ENCODE measurements at regions of chr20 and their contacts with region 1.

Region 1: GRCh38 chr20:21529863-21530262 is 16.0 kb upstream of the NKX2-2 start:
- DNase-seq: peak in 1 of 35 experiments; percentile 49
- ATAC-seq: no peak
- H3K4me3 ChIP-seq: no peak overlapping the region
- H3K4me3 Mint-ChIP-seq: no peak overlapping the region
- H3K27ac ChIP-seq: no peak overlapping the region
- H3K27ac Mint-ChIP-seq: no peak overlapping the region
- H3K4me1 ChIP-seq: no peaks in the 10 kb centered on the region
- H3K4me1 Mint-ChIP-seq: peaks cover 0 to 4% (median 2%) of the 10 kb centered on the region in 3 donors
- H3K27me3 ChIP-seq: peaks cover 3 to 7% of the 10 kb centered on the region in 2 experiments
- H3K27me3 Mint-ChIP-seq: peaks cover 35 to 48% of the 10 kb centered on the region in 2 donors

Region 2: GRCh38 chr20:21118111-21118510 is 411.8 kb before region 1 on chr20:
- CTCF ChIA-PET with region 1: no interaction called
- POLR2A ChIA-PET with region 1: no interaction called
- DNase-seq: no peak
- ATAC-seq: no peak
- H3K4me3 ChIP-seq: no peak overlapping the region
- H3K4me3 Mint-ChIP-seq: no peak overlapping the region
- H3K27ac ChIP-seq: no peak overlapping the region
- H3K27ac Mint-ChIP-seq: no peak overlapping the region
- H3K4me1 ChIP-seq: no peaks in the 10 kb centered on the region
- H3K4me1 Mint-ChIP-seq: no peaks in the 10 kb centered on the region
- H3K27me3 ChIP-seq: peaks cover 9 to 17% of the 10 kb centered on the region in 2 experiments
- H3K27me3 Mint-ChIP-seq: peaks cover 39 to 57% of the 10 kb centered on the region in 2 donors

Region 3: GRCh38 chr20:21571841-21572690 is 42.2 kb after region 1 on chr20:
- CTCF ChIA-PET with region 1: interaction called, 9 to 11 read pairs
- POLR2A ChIA-PET with region 1: no interaction called
- DNase-seq: peak in 5 of 35 experiments; percentile 6 to 54 (median 21)
- ATAC-seq: no peak
- H3K4me3 ChIP-seq: no peak overlapping the region
- H3K4me3 Mint-ChIP-seq: no peak overlapping the region
- H3K27ac ChIP-seq: no peak overlapping the region
- H3K27ac Mint-ChIP-seq: no peak overlapping the region
- H3K4me1 ChIP-seq: peaks cover 0 to 4% of the 10 kb centered on the region in 2 experiments
- H3K4me1 Mint-ChIP-seq: peaks cover 0 to 10% (median 4%) of the 10 kb centered on the region in 3 donors
- H3K27me3 ChIP-seq: peaks cover 0 to 12% of the 10 kb centered on the region in 2 experiments
- H3K27me3 Mint-ChIP-seq: peaks cover 11 to 27% of the 10 kb centered on the region in 2 donors

Region 4: GRCh38 chr20:21670126-21670525 is 140.3 kb after region 1 on chr20:
- CTCF ChIA-PET with region 1: no interaction called
- POLR2A ChIA-PET with region 1: no interaction called
- DNase-seq: no peak
- ATAC-seq: no peak
- H3K4me3 ChIP-seq: no peak overlapping the region
- H3K4me3 Mint-ChIP-seq: no peak overlapping the region
- H3K27ac ChIP-seq: no peak overlapping the region
- H3K27ac Mint-ChIP-seq: no peak overlapping the region
- H3K4me1 ChIP-seq: no peaks in the 10 kb centered on the region
- H3K4me1 Mint-ChIP-seq: no peaks in the 10 kb centered on the region
- H3K27me3 ChIP-seq: peaks cover 0 to 7% of the 10 kb centered on the region in 2 experiments
- H3K27me3 Mint-ChIP-seq: peaks cover 0 to 3% of the 10 kb centered on the region in 2 donors